Dorsolateral prefrontal cortex (tissue), 120 donors: ENCODE measurements at regions of chr15 and their contacts with region 1.

Region 1: DNA sequence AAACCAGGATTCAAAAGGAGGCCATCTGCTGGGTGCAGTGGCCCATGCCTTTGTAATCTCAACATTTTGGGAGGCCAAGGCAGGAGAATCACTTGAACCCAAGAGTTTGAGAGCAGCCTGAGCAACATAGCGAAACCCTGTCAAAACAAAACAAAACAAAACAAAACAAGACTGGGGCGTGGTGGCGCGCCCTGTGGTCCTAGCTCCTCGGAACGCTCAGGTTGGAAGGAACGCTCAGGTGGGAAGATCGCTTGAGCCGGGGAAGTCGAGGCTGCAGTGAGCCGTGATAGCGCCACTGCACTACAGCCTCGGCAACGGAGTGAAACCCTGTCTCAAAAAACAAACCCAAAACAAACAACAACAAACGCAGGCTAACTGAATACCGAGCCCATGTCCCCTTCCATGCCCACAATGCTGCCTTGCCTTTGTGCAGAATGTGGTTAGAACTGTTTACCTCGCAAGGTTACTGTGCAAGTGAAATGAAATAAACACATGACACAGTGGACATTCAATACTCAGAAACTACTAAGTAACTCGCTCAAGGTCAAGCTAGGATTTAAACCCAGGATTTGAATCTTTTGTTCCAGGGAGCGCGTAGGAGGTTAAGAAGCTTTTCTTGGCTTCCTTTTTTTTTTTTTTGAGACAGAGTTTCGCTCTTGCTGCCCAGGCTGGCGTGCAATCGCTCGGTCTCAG is 766 bp upstream of the EMC4 start:
- DNase-seq: no peak
- H3K4me3 ChIP-seq: peak overlapping the region; percentile 66 to 100 (median 94)
- H3K27ac ChIP-seq: peak overlapping the region; percentile 44 to 96 (median 89)
- H3K27me3 ChIP-seq: no peaks in the 10 kb centered on the region
- CTCF ChIP-seq: no peak

Region 2: DNA sequence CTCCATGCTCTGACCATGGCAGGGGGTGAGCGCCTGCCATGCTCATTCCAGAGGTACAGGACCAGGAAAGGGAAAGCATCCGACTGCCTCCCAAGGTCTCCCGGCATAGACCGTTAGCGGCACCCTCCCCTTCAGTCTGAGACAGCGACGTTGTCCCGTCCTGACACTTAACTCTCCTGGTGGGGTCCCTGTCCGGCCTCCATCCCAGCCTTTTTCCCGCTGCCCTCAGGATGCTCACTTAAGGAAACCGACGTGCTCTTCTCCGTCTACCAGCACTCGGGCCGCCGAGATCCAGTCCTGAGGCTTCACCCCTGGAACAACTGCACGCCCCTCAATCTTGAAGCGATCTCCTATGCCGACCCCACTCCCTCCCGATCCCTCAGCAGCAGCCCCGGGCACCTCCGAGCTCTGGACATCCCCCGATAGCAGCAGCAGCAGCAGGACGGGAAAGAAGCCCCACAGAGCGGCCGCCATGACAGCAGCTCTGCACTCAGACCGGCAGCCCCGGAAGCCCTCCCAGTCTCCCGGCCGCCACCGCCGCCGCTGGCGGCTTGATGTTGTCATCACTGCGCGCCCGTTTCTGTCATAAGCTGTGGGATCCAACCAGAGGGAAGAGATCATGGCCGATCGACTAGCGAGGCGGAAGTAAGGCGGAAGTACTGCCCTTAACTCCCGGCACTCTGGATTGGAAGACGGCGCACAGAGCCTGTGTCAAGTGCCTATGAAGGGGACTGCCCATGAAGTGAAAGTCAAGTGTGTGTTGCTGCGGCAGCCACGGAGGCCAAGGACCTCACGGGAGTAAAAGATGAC is 122.5 kb before region 1 on chr15 and contains the starts of genes EMC7 and PGBD4:
- intact Hi-C with region 1: loop called (anchors 1 to 5 kb)
- DNase-seq: peak; percentile 97 to 99 (median 98)
- H3K4me3 ChIP-seq: peak within 1 kb of the TSS; percentile 64 to 99 (median 91)
- H3K27ac ChIP-seq: peak within 1 kb of the TSS; percentile 27 to 93 (median 85)
- H3K27me3 ChIP-seq: no peaks in the 10 kb centered on the region
- CTCF ChIP-seq: peak in 34 of 56 donors; percentile 7 to 56 (median 28)
- total RNA-seq, gene EMC7: 37.5 to 71.0 (median 53.4) TPM
- total RNA-seq, gene PGBD4: 2.6 to 6.9 (median 4.9) TPM

Region 3: GRCh38 chr15:34209421-34210282 is 14.4 kb before region 1 on chr15 and contains the start of gene KATNBL1:
- intact Hi-C with region 1: loop called in 1 of 2 experiments (anchors 1 kb)
- DNase-seq: peak; percentile 91 to 97 (median 94)
- H3K4me3 ChIP-seq: peak within 1 kb of the TSS; percentile 47 to 85 (median 73)
- H3K27ac ChIP-seq: peak within 1 kb of the TSS in 39 of 59 donors; percentile 2 to 81 (median 60)
- H3K27me3 ChIP-seq: no peaks in the 10 kb centered on the region
- CTCF ChIP-seq: peak; percentile 87 to 99 (median 97)
- total RNA-seq, gene KATNBL1: 37.3 to 94.1 (median 63.6) TPM

Region 4: DNA sequence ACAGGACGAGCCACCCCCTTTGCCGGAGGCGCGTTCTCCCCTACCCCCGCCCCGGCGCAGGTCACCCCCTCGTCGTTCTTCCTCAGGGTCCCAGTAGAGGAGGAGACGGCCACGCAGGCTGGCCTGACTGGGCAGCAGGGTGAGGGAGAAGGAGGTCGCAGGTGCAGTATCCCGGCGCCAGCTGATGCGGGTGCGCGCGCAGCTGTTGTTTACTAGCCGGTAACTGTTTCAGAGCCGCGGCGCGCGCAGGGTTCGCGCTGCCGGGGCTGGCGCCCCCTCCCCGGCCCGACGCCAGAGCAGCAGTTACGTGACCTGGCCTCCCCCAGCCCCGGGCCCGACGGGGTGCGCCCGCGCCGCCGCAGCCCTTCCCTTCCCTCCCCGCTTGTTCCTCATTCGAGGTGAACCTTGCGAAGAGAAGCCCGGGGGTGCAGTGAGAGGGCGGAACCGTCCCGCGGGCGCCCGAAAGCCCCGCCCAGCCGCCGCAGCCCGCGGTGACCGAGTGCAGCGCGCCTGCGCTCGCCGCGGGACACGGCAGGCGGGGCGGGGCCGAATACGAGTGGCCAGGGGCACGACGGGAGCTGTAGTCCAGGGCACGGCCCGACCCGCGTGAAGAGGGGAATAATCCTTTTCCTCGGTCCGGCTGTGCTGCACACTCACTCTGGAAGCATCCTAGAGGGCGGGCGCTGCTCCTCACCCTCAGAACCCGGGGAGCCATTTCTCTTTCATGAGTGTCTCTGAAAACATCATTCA is 113.7 kb after region 1 on chr15 and contains the start of gene SLC12A6:
- intact Hi-C with region 1: loop called (anchors 2 to 5 kb)
- DNase-seq: peak; percentile 85 to 95 (median 89)
- H3K4me3 ChIP-seq: peak within 1 kb of the TSS; percentile 62 to 98 (median 90)
- H3K27ac ChIP-seq: peak within 1 kb of the TSS; percentile 73 to 99 (median 96)
- H3K27me3 ChIP-seq: no peaks in the 10 kb centered on the region
- CTCF ChIP-seq: peak in 28 of 56 donors; percentile 8 to 57 (median 22)
- total RNA-seq, gene SLC12A6: 31.2 to 56.8 (median 43.6) TPM

Region 5: DNA sequence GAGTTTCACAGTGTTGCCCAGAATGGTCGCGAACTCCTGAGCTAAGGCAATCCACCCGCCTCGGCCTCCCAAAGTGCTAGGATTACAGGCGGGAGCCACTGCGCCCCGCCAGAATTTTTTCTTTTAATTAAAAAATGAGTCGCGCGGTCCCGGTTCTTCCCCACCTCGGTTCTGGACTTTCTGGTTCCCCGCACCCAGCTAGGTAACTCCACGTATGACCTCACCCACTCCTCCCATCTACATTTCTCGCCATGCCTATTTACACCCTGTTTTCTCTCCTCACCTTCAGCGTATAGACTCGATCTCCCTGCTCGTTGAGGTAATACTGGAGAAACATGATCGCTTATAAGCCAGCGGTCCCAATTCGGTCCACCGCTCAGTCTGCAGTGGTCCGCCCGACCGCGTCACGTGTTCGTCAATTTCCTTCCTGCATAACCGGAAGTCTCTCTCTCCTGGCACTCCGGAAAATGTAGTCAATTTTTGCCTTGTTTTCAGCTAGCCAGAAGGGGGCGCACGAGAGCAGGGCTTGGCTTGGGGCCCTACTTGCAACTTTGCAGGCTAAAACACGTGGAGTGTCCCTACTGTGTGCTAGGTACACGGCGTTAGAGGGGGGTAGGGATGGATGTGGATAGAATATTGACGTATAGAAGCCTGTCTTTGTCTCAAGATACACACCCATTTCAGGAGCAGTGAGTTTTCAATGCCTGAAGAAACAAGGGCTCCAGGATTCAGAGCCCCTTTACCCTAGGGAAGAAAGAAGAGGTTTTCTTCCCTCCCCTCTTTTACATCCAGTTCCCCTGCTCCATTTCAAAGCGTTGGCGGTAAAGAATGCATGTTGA is 118.9 kb after region 1 on chr15 and contains the starts of genes NOP10 and NUTM1:
- intact Hi-C with region 1: loop called (anchors 2 to 5 kb)
- DNase-seq: peak; percentile 82 to 93 (median 91)
- H3K4me3 ChIP-seq: peak within 1 kb of the TSS; percentile 61 to 98 (median 83)
- H3K27ac ChIP-seq: peak within 1 kb of the TSS in 58 of 59 donors; percentile 46 to 95 (median 84)
- H3K27me3 ChIP-seq: no peaks in the 10 kb centered on the region
- CTCF ChIP-seq: peak; percentile 86 to 99 (median 95)
- total RNA-seq, gene NOP10: 27.3 to 73.6 (median 47.5) TPM
- total RNA-seq, gene NUTM1: not detected

Region 6: GRCh38 chr15:34367101-34368081 is 143.3 kb after region 1 on chr15 and contains the start of gene LPCAT4:
- intact Hi-C with region 1: loop called in 1 of 2 experiments (anchors 10 kb)
- DNase-seq: peak; percentile 77 to 92 (median 88)
- H3K4me3 ChIP-seq: peak within 1 kb of the TSS; percentile 71 to 100 (median 92)
- H3K27ac ChIP-seq: peak within 1 kb of the TSS; percentile 78 to 100 (median 96)
- H3K27me3 ChIP-seq: no peaks in the 10 kb centered on the region
- CTCF ChIP-seq: peak; percentile 62 to 99 (median 96)
- total RNA-seq, gene LPCAT4: 71.1 to 266 (median 159) TPM

Region 7: GRCh38 chr15:34987985-34988873 is 764.2 kb after region 1 on chr15 and contains the start of gene ZNF770:
- intact Hi-C with region 1: loop called in 1 of 2 experiments (anchors 10 kb)
- DNase-seq: peak; percentile 61 to 91 (median 70)
- H3K4me3 ChIP-seq: peak within 1 kb of the TSS; percentile 70 to 100 (median 93)
- H3K27ac ChIP-seq: peak within 1 kb of the TSS; percentile 71 to 100 (median 98)
- H3K27me3 ChIP-seq: no peaks in the 10 kb centered on the region
- CTCF ChIP-seq: peak in 34 of 56 donors; percentile 9 to 63 (median 36)
- total RNA-seq, gene ZNF770: 32.2 to 74.1 (median 53.0) TPM